ENCODE measurements at regions of chr4 and their contacts with region 1.

Region 1: DNA sequence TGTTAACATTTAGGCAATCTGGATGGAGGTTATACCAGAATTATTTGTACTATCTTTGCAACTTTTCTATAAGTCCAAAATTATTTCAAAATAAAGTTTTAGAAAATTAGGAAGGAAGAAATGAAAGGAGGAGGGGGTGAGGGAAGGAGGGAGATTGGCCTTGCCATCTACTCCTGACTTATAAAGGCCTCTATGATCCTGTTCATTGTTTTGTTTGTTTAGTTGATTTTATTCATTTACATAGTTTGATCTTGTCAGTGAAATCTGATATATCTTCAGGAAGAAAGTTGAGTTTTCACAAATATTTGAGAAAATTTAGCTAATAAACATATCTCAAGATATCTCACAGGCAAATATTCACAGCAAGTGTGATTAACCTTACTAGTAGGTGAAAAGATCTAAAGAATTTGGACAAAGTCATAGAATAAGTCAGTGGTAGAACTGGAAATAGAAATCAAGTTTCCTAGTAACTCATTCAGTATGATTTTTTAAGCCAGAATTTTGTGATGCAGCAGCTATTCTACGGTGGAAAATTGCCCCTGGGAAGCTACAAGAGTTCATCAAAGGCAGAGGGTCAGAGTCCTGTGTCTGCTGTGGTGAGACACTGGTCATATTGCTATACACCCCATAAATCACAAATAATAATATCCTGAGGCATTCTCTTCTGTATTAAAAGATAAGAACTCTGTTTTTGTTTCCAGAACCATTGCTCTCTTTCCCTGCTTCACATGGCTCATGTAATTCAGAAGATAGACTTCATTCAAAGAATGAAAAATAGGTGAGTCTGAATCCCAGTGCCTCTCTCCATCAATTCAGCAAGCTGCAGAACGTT is 189.0 kb upstream of the NOCT start:
- DNase-seq: no peak
- H3K4me3 ChIP-seq: no peak overlapping the region
- H3K27ac ChIP-seq: no peak overlapping the region
- H3K4me1 ChIP-seq: no peaks in the 10 kb centered on the region
- H3K27me3 ChIP-seq: peaks cover 6 to 7% of the 10 kb centered on the region in 2 experiments
- CTCF ChIP-seq: no peak
- POLR2A ChIP-seq: no peak

Region 2: GRCh38 chr4:138761638-138762220 is 64.8 kb before region 1 on chr4:
- CTCF ChIA-PET with region 1: no interaction called
- POLR2A ChIA-PET with region 1: no interaction called
- dilution Hi-C with region 1: no loop called
- intact Hi-C with region 1: no loop called
- DNase-seq: no peak
- H3K4me3 ChIP-seq: no peak overlapping the region
- H3K27ac ChIP-seq: no peak overlapping the region
- H3K4me1 ChIP-seq: no peaks in the 10 kb centered on the region
- H3K27me3 ChIP-seq: peaks cover 4% of the 10 kb centered on the region in 2 experiments
- CTCF ChIP-seq: no peak
- POLR2A ChIP-seq: no peak

Region 3: DNA sequence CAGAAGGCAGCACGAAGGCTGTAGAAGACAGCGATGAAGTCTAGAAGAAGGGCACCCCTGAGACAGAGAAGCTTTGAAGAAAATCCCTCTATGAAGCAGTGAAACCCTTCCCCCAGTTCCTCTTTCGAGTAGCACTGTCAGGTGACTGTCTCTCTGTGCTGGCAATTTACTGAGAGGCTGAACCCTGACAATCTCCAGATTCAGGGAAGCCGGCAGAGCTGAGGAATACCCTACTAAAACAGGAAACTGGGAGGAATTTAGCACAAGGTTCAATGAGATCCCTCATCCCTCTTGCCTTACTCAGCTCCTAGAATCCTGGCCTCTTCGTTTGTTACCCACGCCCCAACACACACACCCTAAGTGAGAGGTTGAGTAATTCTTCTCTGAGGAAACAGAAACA is 50.6 kb before region 1 on chr4:
- CTCF ChIA-PET with region 1: no interaction called
- POLR2A ChIA-PET with region 1: no interaction called
- dilution Hi-C with region 1: no loop called
- intact Hi-C with region 1: loop called (anchors 1 kb)
- DNase-seq: no peak
- H3K4me3 ChIP-seq: no peak overlapping the region
- H3K27ac ChIP-seq: no peak overlapping the region
- H3K4me1 ChIP-seq: no peaks in the 10 kb centered on the region
- H3K27me3 ChIP-seq: peaks cover 0 to 2% of the 10 kb centered on the region in 2 experiments
- CTCF ChIP-seq: no peak
- POLR2A ChIP-seq: no peak

Region 4: DNA sequence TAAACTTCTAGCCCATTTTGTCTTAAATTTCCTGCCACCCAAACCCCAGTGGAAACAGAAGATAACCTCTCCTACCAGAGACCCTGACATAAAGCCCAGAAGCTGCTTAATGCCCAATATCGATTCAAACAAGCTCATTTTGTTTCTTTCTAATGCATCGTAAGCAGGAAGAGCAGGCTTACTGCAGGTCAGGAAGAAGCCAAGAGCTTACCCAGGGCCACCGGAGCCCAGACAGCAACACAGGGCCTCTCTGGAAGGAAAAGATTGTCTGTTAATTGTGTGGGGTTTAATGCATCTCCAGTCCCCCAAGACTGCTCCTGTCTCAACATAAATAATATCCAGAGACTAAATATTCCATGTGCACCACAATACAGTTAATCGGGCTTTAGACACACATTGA is 11.7 kb after region 1 on chr4:
- CTCF ChIA-PET with region 1: no interaction called
- POLR2A ChIA-PET with region 1: no interaction called
- dilution Hi-C with region 1: no loop called
- intact Hi-C with region 1: no loop called
- DNase-seq: no peak
- H3K4me3 ChIP-seq: no peak overlapping the region
- H3K27ac ChIP-seq: no peak overlapping the region
- H3K4me1 ChIP-seq: no peaks in the 10 kb centered on the region
- H3K27me3 ChIP-seq: peaks cover 2 to 25% of the 10 kb centered on the region in 2 experiments
- CTCF ChIP-seq: no peak
- POLR2A ChIP-seq: no peak